Kidney (tissue), 22 donors: ENCODE measurements at regions of chr1 and their contacts with region 1.

Region 1: DNA sequence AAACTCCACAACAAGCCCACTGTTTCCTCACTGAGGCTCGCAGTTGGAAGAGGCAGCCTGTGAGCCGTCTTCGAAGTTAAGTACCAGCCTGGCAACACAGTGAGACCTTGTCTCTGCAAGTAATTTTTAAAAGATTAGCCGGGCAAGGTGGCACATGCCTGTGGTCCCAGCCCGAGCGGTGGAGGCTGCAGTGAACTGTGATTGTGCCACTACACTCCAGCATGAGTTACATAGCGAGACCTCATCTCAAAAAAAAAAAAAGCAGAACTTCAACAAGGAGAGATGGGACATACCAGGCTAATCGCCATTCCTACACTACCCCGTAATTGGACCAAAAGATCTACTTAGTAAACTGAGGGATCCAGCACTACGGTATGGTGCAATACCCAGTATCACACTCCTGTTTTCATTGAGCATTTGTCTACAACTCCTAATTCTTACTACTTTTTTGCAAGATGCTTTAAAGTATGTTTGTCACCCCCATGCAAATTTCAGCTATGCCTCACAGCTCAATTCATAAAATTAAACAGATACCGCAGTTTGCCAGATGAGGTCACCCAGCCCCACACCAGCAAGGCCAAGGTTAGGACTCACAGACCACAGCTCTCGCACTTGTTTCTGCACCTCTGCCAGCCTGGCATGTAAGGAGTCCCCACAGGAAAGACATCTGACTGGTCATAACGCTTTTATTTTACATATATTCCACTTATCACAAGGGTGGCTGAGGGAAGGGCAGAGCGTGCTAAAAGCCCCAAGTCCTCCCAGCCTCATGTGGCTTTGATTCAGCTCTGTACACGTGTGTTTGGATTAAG is 21.0 kb downstream of the SDE2 start:
- DNase-seq: no peak
- H3K4me3 ChIP-seq: no peak overlapping the region
- H3K27ac ChIP-seq: no peak overlapping the region
- H3K4me1 ChIP-seq: peaks cover 0 to 2% (median 0%) of the 10 kb centered on the region in 3 donors
- H3K27me3 ChIP-seq: no peaks in the 10 kb centered on the region
- CTCF ChIP-seq: no peak

Region 2: DNA sequence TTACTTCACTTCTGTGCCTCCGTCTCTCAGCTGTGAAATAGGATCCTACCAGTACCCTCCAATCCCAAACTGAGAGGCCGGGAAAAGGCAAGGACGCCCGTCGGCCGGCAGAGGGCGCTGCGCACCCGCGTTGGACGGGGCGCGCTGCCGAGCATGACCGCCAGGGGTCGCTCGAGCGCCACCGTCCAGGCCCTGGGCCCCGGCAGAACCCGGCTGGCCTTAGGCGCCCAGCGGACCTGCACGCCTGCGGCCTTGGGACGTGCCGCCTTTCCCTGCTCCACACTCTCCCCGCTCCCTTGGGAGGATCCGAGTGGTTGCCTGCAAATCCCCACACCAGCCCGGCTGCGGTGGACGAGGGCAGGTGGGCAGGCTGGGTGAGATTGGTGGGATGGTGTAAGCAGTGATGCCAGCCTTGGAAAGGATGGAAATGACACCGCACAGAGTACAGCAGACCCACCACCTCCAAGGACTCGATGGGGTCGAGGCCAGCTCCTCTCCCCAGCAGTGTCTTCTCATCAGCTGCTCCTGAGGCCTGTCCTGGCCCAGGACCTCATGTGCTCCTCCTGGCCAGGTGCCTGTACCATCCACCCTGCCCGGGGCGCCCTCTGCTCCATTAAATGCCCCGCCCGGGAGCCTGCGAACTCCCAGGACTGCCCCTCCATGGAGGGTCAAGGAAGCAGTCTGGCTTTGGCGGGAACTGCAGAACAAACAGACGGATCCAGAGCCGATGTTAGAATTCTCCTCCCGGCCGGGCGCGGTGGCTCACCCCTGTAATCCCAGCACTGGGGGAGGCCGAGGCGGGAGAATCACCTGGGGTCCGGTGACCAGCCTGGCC is 502.9 kb before region 1 on chr1:
- intact Hi-C with region 1: loop called (anchors 10 kb)
- DNase-seq: peak; percentile 79 to 90 (median 86)
- H3K4me3 ChIP-seq: peak overlapping the region in 1 of 3 donors; percentile 40
- H3K27ac ChIP-seq: no peak overlapping the region
- H3K4me1 ChIP-seq: peaks cover 0 to 5% (median 5%) of the 10 kb centered on the region in 3 donors
- H3K27me3 ChIP-seq: no peaks in the 10 kb centered on the region
- CTCF ChIP-seq: peak; percentile 100

Region 3: GRCh38 chr1:225754940-225755641 is 223.1 kb before region 1 on chr1:
- intact Hi-C with region 1: no loop called
- DNase-seq: peak in 2 of 5 donors; percentile 41 to 60
- H3K4me3 ChIP-seq: no peak overlapping the region
- H3K27ac ChIP-seq: no peak overlapping the region
- H3K4me1 ChIP-seq: peaks cover 0 to 6% (median 0%) of the 10 kb centered on the region in 3 donors
- H3K27me3 ChIP-seq: no peaks in the 10 kb centered on the region
- CTCF ChIP-seq: no peak

Region 4: GRCh38 chr1:225777583-225778336 is 200.4 kb before region 1 on chr1 and contains the start of gene SRP9:
- intact Hi-C with region 1: no loop called
- DNase-seq: peak; percentile 99 to 100 (median 100)
- H3K4me3 ChIP-seq: peak within 1 kb of the TSS; percentile 81 to 99 (median 98)
- H3K27ac ChIP-seq: peak within 1 kb of the TSS; percentile 79 to 92
- H3K4me1 ChIP-seq: peaks cover 0 to 11% (median 5%) of the 10 kb centered on the region in 3 donors
- H3K27me3 ChIP-seq: no peaks in the 10 kb centered on the region
- CTCF ChIP-seq: peak; percentile 82
- total RNA-seq, gene SRP9: 199 TPM